Colonic mucosa (tissue), 4 donors: ENCODE measurements at regions of chr16 and their contacts with region 1.

Region 1: DNA sequence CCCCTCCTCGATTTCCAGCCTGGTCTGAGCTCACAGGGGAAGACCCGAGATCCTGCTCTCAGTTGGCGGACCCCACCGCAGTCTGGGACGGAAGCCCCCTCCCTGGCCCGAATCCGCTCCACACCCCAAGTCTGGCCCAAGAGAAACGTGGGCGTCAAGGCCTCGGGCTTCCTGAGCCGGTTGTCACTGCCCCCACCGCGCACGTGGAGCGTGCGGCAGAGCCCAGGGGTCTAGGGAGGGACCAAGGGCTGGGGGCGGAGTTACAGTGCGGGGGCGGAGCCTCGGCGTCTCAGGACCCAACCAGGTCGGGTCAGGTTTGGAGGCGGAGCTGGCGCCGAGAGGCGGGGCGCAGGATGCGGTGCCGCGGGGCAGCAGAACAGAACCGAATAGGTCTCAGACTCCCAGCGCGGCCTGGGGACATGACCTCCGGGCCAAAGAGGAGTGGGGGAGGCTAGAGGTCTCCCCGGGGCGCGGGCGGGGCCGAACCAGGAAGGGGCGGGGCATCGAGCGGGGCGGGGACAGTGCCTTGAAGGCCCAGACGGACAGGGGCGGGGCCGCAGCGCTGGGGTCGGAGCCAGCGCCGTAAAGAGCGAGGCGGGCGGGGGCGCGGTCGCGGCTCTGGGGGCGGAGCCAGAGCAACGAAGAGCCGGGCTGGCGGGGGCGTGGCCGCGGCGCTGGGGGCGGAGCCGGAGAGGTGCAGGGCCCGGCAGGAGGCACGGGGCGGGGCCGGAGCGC is 431 bp upstream of the ZFPM1 start:
- DNase-seq: peak; percentile 98
- H3K4me3 ChIP-seq: peak overlapping the region; percentile 31
- H3K27ac ChIP-seq: peak overlapping the region; percentile 31
- H3K4me1 ChIP-seq: peaks cover 9% of the 10 kb centered on the region
- H3K27me3 ChIP-seq: no peaks in the 10 kb centered on the region
- CTCF ChIP-seq: no peak

Region 2: GRCh38 chr16:88561485-88562369 is 109.1 kb after region 1 on chr16:
- intact Hi-C with region 1: loop called (anchors 2 kb)
- DNase-seq: peak; percentile 37
- H3K4me3 ChIP-seq: no peak overlapping the region
- H3K27ac ChIP-seq: no peak overlapping the region
- H3K4me1 ChIP-seq: no peaks in the 10 kb centered on the region
- H3K27me3 ChIP-seq: peaks cover 1% of the 10 kb centered on the region
- CTCF ChIP-seq: peak; percentile 31

Region 3: GRCh38 chr16:88633684-88634140 is 181.1 kb after region 1 on chr16:
- intact Hi-C with region 1: no loop called
- DNase-seq: peak; percentile 64
- H3K4me3 ChIP-seq: peak overlapping the region; percentile 44
- H3K27ac ChIP-seq: no peak overlapping the region
- H3K4me1 ChIP-seq: peaks cover 4% of the 10 kb centered on the region
- H3K27me3 ChIP-seq: peaks cover under 1% of the 10 kb centered on the region
- CTCF ChIP-seq: peak; percentile 40

Region 4: GRCh38 chr16:88681709-88682451 is 229.2 kb after region 1 on chr16:
- intact Hi-C with region 1: no loop called
- DNase-seq: no peak
- H3K4me3 ChIP-seq: no peak overlapping the region
- H3K27ac ChIP-seq: peak overlapping the region; percentile 68
- H3K4me1 ChIP-seq: peaks cover 8% of the 10 kb centered on the region
- H3K27me3 ChIP-seq: peaks cover 15% of the 10 kb centered on the region
- CTCF ChIP-seq: no peak